ENCODE measurements at regions of chr4 and their contacts with region 1.

Region 1: GRCh38 chr4:153142700-153143438 is 61.4 kb upstream of the TRIM2 start:
- DNase-seq: peak; percentile 79
- H3K4me3 Mint-ChIP-seq: no peak overlapping the region
- H3K27ac Mint-ChIP-seq: no peak overlapping the region
- H3K4me1 Mint-ChIP-seq: peaks cover 17% of the 10 kb centered on the region
- H3K27me3 Mint-ChIP-seq: no peaks in the 10 kb centered on the region
- CTCF ChIP-seq: peak; percentile 95

Region 2: DNA sequence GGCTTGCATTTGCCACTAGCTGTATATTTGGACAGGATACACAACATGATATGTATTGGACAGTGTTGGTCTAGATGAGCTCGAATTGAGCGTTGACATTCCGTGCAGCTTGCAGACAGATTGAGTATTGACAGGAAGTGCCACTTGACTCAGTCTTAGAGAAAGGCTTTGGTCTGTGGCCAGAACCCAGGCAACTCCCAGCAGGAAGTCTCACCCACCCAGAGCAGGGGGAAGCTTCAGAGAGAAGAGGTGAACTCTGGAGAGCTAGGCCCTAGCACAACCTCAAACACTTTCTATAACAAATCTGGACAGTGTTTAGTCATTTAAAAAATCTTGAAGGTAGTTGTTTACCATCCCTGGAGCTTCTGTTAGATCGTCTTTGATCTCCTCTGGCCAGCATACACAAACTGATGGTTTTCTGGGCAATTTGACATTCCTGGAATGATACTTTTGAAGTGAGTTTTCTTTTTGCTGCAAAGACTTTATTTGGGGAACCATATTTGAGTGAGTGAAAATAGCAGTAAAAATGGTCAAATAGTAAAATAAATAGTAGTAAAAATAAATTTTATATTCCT is 887.3 kb before region 1 on chr4:
- CTCF ChIA-PET with region 1: no interaction called
- POLR2A ChIA-PET with region 1: no interaction called
- intact Hi-C with region 1: no loop called
- DNase-seq: peak; percentile 57
- H3K4me3 Mint-ChIP-seq: no peak overlapping the region
- H3K27ac Mint-ChIP-seq: no peak overlapping the region
- H3K4me1 Mint-ChIP-seq: peaks cover 19% of the 10 kb centered on the region
- H3K27me3 Mint-ChIP-seq: no peaks in the 10 kb centered on the region
- CTCF ChIP-seq: no peak

Region 3: GRCh38 chr4:152374606-152375285 is 768.1 kb before region 1 on chr4:
- CTCF ChIA-PET with region 1: no interaction called
- POLR2A ChIA-PET with region 1: no interaction called
- intact Hi-C with region 1: no loop called
- DNase-seq: no peak
- H3K4me3 Mint-ChIP-seq: no peak overlapping the region
- H3K27ac Mint-ChIP-seq: no peak overlapping the region
- H3K4me1 Mint-ChIP-seq: peaks cover 5% of the 10 kb centered on the region
- H3K27me3 Mint-ChIP-seq: no peaks in the 10 kb centered on the region
- CTCF ChIP-seq: no peak

Region 4: DNA sequence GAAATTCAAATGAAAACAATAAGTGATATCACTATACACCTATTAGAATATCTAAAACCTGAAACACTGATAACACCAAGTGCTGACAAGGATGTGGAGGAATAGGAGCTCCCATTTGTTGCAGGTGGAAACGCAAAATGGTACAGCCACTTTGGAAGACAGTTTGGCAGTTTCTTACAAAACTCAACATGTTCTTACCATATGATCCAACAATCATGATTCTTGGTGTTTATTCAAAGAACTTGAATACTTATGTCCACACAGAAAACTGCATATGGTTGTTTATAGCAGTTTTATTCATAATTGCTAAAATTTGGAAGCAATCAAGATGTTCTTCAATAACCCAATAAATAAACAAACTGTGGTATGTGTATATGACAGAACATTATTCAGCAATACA is 98.8 kb before region 1 on chr4:
- CTCF ChIA-PET with region 1: no interaction called
- POLR2A ChIA-PET with region 1: no interaction called
- intact Hi-C with region 1: no loop called
- DNase-seq: no peak
- H3K4me3 Mint-ChIP-seq: no peak overlapping the region
- H3K27ac Mint-ChIP-seq: no peak overlapping the region
- H3K4me1 Mint-ChIP-seq: no peaks in the 10 kb centered on the region
- H3K27me3 Mint-ChIP-seq: no peaks in the 10 kb centered on the region
- CTCF ChIP-seq: no peak

Region 5: DNA sequence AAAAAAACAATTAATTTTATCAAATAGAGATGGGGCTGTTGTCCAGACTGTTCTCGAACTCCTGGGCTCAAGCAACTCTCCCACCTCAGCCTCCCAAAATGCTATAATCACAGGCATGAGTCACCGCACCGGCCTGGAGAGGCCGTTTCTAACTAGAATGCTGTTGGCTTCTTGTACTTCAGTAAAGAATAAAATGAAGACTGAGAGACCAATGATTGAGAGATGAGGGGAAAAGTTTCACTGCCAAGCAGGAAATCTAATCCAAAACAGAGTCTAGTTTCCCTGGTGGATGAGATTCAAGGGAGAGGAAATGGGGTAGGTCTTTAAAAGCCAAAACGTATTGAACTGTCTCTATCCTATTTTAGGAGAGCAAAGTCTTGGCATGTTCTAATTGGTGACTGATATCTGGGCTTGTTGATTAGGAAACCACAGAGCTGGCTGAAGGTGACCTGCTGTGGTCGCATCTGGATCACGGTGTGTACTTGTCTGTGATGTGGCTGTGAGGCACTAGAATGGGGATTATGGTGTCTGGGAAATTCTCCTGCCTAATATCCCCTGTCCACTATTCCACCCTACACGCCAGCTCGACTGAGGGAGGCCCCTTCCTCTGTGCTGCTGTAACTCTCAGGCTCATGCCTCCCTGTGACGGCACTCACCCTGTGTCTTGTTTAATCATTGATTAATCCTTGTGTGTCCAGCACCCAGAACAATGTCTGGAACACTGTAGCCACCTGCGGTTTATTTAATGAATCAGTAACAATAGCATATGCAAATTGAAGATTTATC is 46.3 kb after region 1 on chr4:
- CTCF ChIA-PET with region 1: interaction called, 10 read pairs
- POLR2A ChIA-PET with region 1: no interaction called
- intact Hi-C with region 1: no loop called
- DNase-seq: no peak
- H3K4me3 Mint-ChIP-seq: no peak overlapping the region
- H3K27ac Mint-ChIP-seq: peak overlapping the region; percentile 68
- H3K4me1 Mint-ChIP-seq: peaks cover 8% of the 10 kb centered on the region
- H3K27me3 Mint-ChIP-seq: no peaks in the 10 kb centered on the region
- CTCF ChIP-seq: no peak

Region 6: GRCh38 chr4:153310793-153311192 is 167.9 kb after region 1 on chr4:
- CTCF ChIA-PET with region 1: interaction called, 20 read pairs
- POLR2A ChIA-PET with region 1: no interaction called
- intact Hi-C with region 1: no loop called
- DNase-seq: no peak
- H3K4me3 Mint-ChIP-seq: no peak overlapping the region
- H3K27ac Mint-ChIP-seq: no peak overlapping the region
- H3K4me1 Mint-ChIP-seq: no peaks in the 10 kb centered on the region
- H3K27me3 Mint-ChIP-seq: no peaks in the 10 kb centered on the region
- CTCF ChIP-seq: no peak

Region 7: GRCh38 chr4:153326513-153326912 is 183.6 kb after region 1 on chr4:
- CTCF ChIA-PET with region 1: interaction called, 33 read pairs
- POLR2A ChIA-PET with region 1: no interaction called
- intact Hi-C with region 1: no loop called
- DNase-seq: peak; percentile 71
- H3K4me3 Mint-ChIP-seq: no peak overlapping the region
- H3K27ac Mint-ChIP-seq: no peak overlapping the region
- H3K4me1 Mint-ChIP-seq: no peaks in the 10 kb centered on the region
- H3K27me3 Mint-ChIP-seq: no peaks in the 10 kb centered on the region
- CTCF ChIP-seq: no peak

Region 8: GRCh38 chr4:153432968-153433753 is 290.3 kb after region 1 on chr4:
- CTCF ChIA-PET with region 1: no interaction called
- POLR2A ChIA-PET with region 1: no interaction called
- intact Hi-C with region 1: loop called (anchors 1 kb)
- DNase-seq: peak; percentile 95
- H3K4me3 Mint-ChIP-seq: peak overlapping the region; percentile 57
- H3K27ac Mint-ChIP-seq: peak overlapping the region; percentile 72
- H3K4me1 Mint-ChIP-seq: peaks cover 7% of the 10 kb centered on the region
- H3K27me3 Mint-ChIP-seq: no peaks in the 10 kb centered on the region
- CTCF ChIP-seq: peak; percentile 53

Region 9: DNA sequence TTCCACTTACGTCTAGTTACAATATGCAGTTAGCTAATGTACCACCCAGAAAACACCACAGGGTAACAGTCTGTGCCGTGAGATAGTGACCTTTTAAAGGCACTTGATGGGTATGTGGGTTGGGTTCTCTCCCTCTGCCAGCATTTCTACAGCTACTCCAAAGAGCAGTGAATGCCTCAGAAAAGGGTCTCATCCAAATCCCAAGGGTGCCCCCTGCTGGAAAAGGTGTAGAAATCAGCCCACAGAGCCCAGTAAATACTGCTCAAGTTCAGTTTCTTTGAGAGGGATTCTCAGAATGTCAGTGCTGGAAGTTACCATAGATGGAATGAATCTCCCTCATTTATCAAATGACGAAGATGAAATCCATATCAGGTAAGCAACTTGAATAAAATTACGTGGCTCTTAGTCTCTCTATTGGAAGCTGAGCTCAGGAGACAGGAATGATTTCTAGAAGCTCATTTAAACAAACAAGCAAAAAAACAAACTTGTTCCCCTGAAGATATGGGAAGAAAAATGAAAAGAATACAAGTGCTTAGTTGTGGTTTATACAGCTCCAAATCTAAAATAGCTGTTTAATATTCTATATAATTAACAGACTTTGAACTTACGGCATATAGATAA is 607.4 kb after region 1 on chr4:
- CTCF ChIA-PET with region 1: no interaction called
- POLR2A ChIA-PET with region 1: no interaction called
- intact Hi-C with region 1: loop called (anchors 5 kb)
- DNase-seq: peak; percentile 97
- H3K4me3 Mint-ChIP-seq: no peak overlapping the region
- H3K27ac Mint-ChIP-seq: no peak overlapping the region
- H3K4me1 Mint-ChIP-seq: peaks cover 16% of the 10 kb centered on the region
- H3K27me3 Mint-ChIP-seq: no peaks in the 10 kb centered on the region
- CTCF ChIP-seq: peak; percentile 75

Measured in MCF 10A (cell line).